ENCODE measurements at regions of chr3 and their contacts with region 1.

Region 1: DNA sequence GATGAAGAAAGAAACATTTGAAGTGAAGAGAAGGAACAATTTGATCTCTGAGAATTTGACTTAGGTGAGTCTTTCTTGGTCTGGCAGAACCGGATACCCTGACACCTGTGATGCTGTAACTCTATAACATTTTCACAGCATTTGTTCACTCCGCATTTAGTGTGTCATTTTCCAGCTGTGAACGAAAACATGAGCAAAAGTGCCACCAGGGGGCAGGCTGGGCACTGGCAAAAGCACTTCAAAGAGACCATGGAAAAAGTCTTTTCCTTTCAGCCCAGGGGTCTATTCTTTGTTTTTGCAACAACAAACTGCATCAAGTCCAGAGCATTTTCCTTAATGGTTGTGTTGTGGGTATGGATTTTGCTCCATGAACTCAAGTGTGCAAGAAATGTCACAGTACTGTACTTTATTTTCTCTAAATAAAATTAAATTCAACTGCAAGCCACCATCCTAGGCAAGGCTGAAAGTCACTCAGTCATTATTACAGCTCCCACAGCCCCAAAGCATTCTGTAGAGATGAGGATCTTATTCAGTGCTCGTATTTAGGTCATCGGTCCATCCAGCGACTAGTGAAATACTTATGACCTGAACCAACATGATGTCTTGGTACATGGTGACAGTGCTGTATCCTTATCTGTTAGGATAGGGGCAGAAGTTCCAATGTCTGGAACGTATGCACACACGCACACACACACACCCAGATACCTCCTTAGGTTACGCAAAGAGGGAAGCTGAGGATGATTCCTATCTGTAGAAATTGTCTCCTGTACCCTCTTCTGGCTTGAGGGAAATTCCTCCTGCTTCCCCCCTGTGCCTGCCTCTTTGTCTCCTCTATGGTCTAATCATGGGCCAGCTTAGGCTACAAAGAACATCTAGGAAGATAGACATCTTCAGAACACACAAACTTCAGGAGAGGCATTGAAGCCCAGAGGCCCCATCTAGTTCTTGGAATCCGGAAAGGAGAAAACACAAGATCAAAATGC is 125.5 kb downstream of the GADL1 start:
- DNase-seq: peak; percentile 59
- H3K4me3 Mint-ChIP-seq: no peak overlapping the region
- H3K27ac Mint-ChIP-seq: no peak overlapping the region
- H3K4me1 Mint-ChIP-seq: peaks cover 14% of the 10 kb centered on the region
- H3K27me3 Mint-ChIP-seq: peaks cover 20% of the 10 kb centered on the region

Region 2: GRCh38 chr3:30042274-30042859 is 726.6 kb before region 1 on chr3:
- intact Hi-C with region 1: loop called (anchors 1 kb)
- DNase-seq: peak; percentile 20
- H3K4me3 Mint-ChIP-seq: no peak overlapping the region
- H3K27ac Mint-ChIP-seq: no peak overlapping the region
- H3K4me1 Mint-ChIP-seq: no peaks in the 10 kb centered on the region
- H3K27me3 Mint-ChIP-seq: peaks cover 13% of the 10 kb centered on the region

Region 3: DNA sequence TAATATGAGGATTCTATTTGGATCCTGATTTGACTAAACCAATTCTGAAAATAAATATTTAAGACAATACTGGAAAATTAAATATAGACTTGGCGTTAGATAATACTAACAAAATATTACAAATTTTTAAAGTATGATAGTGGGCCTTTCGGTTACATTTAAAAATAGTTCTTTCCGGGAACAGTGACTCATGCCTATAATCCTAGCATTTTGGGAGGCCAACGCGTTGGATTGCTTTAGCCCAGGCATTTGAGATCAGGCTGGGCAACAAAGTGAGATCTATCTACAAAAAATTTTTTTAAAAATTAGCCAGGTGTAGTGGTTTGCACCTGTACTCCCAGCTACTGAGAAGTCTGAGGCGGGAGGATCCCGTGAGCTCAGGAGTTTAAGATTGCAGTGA is 155.8 kb after region 1 on chr3:
- intact Hi-C with region 1: loop called (anchors 2 kb)
- DNase-seq: no peak
- H3K4me3 Mint-ChIP-seq: no peak overlapping the region
- H3K27ac Mint-ChIP-seq: no peak overlapping the region
- H3K4me1 Mint-ChIP-seq: no peaks in the 10 kb centered on the region
- H3K27me3 Mint-ChIP-seq: peaks cover 14% of the 10 kb centered on the region

Region 4: DNA sequence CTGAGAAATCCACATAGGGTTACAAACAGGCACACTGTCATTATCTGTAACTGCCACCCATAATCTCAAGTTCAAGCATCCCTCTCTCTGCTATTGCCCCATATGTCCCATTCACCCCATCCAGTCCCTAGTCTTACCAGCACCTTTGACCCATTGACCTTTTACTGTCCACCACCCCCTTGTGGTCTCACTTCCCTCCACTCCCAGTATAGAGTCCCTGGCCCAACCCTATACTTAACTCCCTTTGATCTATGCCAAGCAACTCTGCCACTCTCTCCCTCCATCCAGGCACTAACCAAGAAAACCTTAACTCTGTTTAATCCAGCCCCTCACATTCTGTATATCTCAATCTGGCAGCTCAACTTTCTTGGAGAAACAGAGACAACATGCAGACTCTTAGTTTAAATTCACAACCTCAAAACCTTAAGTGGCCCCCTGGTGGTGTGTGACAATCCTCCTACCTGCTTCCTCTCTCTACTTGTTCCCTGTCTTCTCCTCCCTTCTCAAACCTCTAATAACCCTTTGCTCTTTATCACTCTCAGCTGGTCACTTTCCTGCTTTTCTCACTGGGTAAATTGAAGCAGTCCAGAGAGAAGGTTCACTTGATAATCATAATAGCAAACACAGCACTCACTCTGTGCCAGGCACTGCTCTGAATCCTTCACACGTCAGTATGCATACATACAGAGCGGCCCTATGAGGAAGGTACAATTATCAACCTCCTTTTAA is 926.5 kb after region 1 on chr3:
- intact Hi-C with region 1: loop called (anchors 2 kb)
- DNase-seq: no peak
- H3K4me3 Mint-ChIP-seq: no peak overlapping the region
- H3K27ac Mint-ChIP-seq: no peak overlapping the region
- H3K4me1 Mint-ChIP-seq: no peaks in the 10 kb centered on the region
- H3K27me3 Mint-ChIP-seq: no peaks in the 10 kb centered on the region

Measured in activated T-helper 1 cell treated with anti-CD3 and anti-CD28 coated beads, Interleukin-12 subunit alpha, Interleukin-12 subunit beta, Interleukin-2, Interleukin-4 antibody, amounts not matched to agents 30 ng/mL and 10 ng/mL and 1 ng/mL, durations not matched to agents 14 hours and 24 hours and 36 hours (primary cell).